Activated CD4-positive, alpha-beta T cell treated with anti-CD3 and anti-CD28 coated beads for 36 hours (primary cell): ENCODE measurements at regions of chr19 and their contacts with region 1.

Region 1: GRCh38 chr19:54189735-54190502 is 539 bp upstream of the MBOAT7 start:
- DNase-seq: peak; percentile 100
- ATAC-seq: peak; percentile 69
- H3K4me3 Mint-ChIP-seq: peak overlapping the region; percentile 76
- H3K27ac Mint-ChIP-seq: peak overlapping the region; percentile 96
- H3K4me1 Mint-ChIP-seq: peaks cover 34% of the 10 kb centered on the region
- H3K27me3 Mint-ChIP-seq: no peaks in the 10 kb centered on the region

Region 2: DNA sequence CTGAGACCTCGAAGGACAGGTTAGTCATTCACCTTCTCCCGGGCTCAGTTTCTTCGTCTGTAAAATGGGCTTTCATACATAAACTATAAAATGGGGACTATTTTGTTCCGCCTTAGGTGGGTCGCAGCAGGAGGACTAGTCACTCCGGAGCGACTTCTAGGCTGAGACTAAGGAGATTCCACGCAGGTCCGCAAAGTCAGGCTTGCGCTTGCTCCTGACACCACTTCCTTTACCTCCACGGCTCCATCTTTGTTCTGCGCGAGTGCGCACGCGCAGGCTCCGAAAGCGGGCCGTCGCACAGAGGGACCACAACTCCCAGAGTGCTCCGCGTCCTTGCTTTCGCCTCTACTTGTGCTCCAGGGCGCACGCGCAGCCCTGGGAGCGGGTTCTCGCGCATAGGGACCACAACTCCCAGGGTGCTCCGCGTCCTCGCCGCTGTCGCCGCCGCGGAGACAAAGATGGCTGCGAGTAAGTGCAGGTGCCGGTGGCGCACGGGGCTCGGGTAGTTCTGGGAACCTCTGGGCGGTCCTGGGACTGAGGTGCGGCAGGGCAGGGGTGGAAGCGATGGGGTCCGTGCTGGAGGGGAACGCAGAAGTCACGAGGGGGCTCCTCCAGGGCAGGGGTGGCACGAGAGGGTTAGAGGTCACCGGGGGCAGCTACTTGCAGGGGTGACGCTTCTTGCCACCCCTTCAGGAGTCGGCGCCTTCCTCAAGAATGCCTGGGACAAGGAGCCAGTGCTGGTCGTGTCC is 87.3 kb before region 1 on chr19 and contains the start of gene NDUFA3:
- CTCF ChIA-PET with region 1: no interaction called
- POLR2A ChIA-PET with region 1: no interaction called
- intact Hi-C with region 1: loop called in 1 of 2 experiments (anchors 1 kb)
- DNase-seq: peak; percentile 98
- ATAC-seq: peak; percentile 99
- H3K4me3 Mint-ChIP-seq: peak within 1 kb of the TSS; percentile 93
- H3K27ac Mint-ChIP-seq: peak within 1 kb of the TSS; percentile 96
- H3K4me1 Mint-ChIP-seq: peaks cover 16% of the 10 kb centered on the region
- H3K27me3 Mint-ChIP-seq: no peaks in the 10 kb centered on the region
- total RNA-seq, gene NDUFA3: 99.9 to 158 TPM

Region 3: GRCh38 chr19:54159352-54160181 is 30.4 kb before region 1 on chr19 and contains the start of gene LENG1:
- CTCF ChIA-PET with region 1: interaction called, 9 read pairs
- POLR2A ChIA-PET with region 1: interaction called, 4 read pairs
- intact Hi-C with region 1: loop called (anchors 1 kb)
- DNase-seq: peak; percentile 99
- ATAC-seq: peak; percentile 90
- H3K4me3 Mint-ChIP-seq: peak within 1 kb of the TSS; percentile 87
- H3K27ac Mint-ChIP-seq: peak within 1 kb of the TSS; percentile 98
- H3K4me1 Mint-ChIP-seq: peaks cover 56% of the 10 kb centered on the region
- H3K27me3 Mint-ChIP-seq: peaks cover 7% of the 10 kb centered on the region
- total RNA-seq, gene LENG1: 3.5 to 3.6 TPM

Region 4: DNA sequence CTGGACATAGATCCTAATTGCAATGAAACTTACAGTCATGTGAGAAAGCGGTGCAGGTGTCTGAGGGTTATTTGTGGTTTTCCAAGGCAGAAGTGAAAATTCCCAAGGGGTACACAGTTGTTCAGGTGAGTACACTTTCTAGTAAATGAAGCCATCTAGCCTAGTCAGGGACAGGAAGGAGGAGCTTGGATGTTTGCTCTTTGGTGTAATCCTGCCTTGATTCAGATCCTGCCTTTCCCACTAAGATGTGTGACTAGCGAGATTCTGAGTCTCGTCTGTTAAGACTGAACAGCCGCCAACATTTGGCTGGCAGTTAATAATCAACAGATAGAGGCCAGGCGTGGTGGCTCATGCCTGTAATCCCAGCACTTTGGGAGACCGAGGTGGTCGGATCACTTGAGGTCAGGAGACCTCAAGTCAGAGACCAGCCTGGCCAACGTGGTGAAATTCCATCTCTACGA is 13.3 kb after region 1 on chr19:
- CTCF ChIA-PET with region 1: interaction called, 5 read pairs
- POLR2A ChIA-PET with region 1: interaction called, 75 read pairs
- intact Hi-C with region 1: loop called (anchors 1 kb)
- DNase-seq: no peak
- ATAC-seq: no peak
- H3K4me3 Mint-ChIP-seq: peak overlapping the region; percentile 97
- H3K27ac Mint-ChIP-seq: peak overlapping the region; percentile 100
- H3K4me1 Mint-ChIP-seq: peaks cover 67% of the 10 kb centered on the region
- H3K27me3 Mint-ChIP-seq: no peaks in the 10 kb centered on the region

Region 5: DNA sequence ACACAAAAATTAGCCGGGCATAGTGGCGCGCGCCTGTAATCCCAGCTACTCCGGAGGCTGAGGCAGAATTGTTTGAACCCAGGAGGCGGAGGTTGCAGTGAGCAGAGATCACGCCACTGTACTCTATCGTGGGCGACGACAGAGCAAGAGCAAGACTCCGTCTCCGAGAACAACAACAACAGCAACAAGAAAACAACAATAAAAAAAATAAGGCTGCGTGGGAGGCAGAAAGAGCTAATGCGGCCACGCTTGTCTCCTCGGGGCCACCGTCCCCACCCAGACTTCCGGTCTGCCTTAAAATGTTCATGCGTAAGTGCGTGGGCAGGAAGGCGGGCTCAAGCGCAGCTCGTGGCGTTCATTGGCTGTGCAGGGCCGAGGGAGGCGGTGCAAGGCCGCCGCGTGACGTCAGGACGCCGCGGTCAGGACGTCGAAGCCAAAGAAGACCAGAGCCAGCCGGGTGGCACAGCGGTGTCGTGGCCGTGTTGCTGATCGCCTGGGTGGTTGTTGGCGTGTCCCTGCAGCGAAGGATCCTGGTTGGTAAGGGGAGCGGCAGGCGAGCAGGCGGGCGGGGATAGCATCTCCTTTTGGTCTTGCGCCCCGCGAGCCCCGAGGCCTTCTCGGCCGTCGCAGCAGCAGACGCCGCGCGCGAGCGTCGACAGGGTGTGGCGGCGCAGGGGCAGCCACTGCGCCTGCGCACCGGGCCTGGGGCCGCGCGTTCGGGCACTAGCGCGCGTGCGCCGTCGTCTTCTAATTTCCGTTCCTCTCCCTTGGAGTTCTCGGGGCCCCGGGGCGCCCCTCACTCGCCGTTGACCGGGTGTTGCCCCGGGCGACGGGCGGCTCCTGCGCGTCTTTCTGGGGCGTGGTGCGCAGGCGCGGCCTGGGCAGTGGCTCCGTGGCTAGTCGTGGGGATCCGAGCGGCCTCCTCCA is 259.1 kb after region 1 on chr19 and contains the start of gene LENG8:
- CTCF ChIA-PET with region 1: no interaction called
- POLR2A ChIA-PET with region 1: no interaction called
- intact Hi-C with region 1: loop called in 1 of 2 experiments (anchors 1 kb)
- DNase-seq: peak; percentile 98
- ATAC-seq: peak; percentile 92
- H3K4me3 Mint-ChIP-seq: peak within 1 kb of the TSS; percentile 98
- H3K27ac Mint-ChIP-seq: peak within 1 kb of the TSS; percentile 98
- H3K4me1 Mint-ChIP-seq: peaks cover 36% of the 10 kb centered on the region
- H3K27me3 Mint-ChIP-seq: no peaks in the 10 kb centered on the region
- total RNA-seq, gene LENG8: 156 to 221 TPM

Region 6: GRCh38 chr19:55385740-55386529 is 1196.0 kb after region 1 on chr19 and contains the start of gene RPL28:
- CTCF ChIA-PET with region 1: no interaction called
- POLR2A ChIA-PET with region 1: no interaction called
- intact Hi-C with region 1: loop called in 1 of 2 experiments (anchors 2 kb)
- DNase-seq: peak; percentile 98
- ATAC-seq: peak; percentile 85
- H3K4me3 Mint-ChIP-seq: peak within 1 kb of the TSS; percentile 89
- H3K27ac Mint-ChIP-seq: peak within 1 kb of the TSS; percentile 98
- H3K4me1 Mint-ChIP-seq: peaks cover 51% of the 10 kb centered on the region
- H3K27me3 Mint-ChIP-seq: no peaks in the 10 kb centered on the region
- total RNA-seq, gene RPL28: 2,751 to 4,078 TPM